ENCODE measurements at regions of chr13 and their contacts with region 1.

Region 1: GRCh38 chr13:36999054-36999714 is at the start of gene ALG5:
- DNase-seq: peak; percentile 93
- H3K4me3 Mint-ChIP-seq: peak within 1 kb of the TSS; percentile 100
- H3K27ac Mint-ChIP-seq: peak within 1 kb of the TSS; percentile 100
- H3K4me1 Mint-ChIP-seq: peaks cover 37% of the 10 kb centered on the region
- H3K27me3 Mint-ChIP-seq: no peaks in the 10 kb centered on the region
- total RNA-seq, gene ALG5: 45.6 and 49.8 TPM in 2 replicates

Region 2: GRCh38 chr13:36431654-36432511 is 567.3 kb before region 1 on chr13 and contains the start of gene CCNA1:
- intact Hi-C with region 1: loop called (anchors 2 kb)
- DNase-seq: peak; percentile 32
- H3K4me3 Mint-ChIP-seq: peak within 1 kb of the TSS; percentile 74
- H3K27ac Mint-ChIP-seq: no peak within 1 kb of the TSS
- H3K4me1 Mint-ChIP-seq: peaks cover 27% of the 10 kb centered on the region
- H3K27me3 Mint-ChIP-seq: peaks cover 40% of the 10 kb centered on the region
- total RNA-seq, gene CCNA1: 4.3 and 5.0 TPM in 2 replicates

Region 3: DNA sequence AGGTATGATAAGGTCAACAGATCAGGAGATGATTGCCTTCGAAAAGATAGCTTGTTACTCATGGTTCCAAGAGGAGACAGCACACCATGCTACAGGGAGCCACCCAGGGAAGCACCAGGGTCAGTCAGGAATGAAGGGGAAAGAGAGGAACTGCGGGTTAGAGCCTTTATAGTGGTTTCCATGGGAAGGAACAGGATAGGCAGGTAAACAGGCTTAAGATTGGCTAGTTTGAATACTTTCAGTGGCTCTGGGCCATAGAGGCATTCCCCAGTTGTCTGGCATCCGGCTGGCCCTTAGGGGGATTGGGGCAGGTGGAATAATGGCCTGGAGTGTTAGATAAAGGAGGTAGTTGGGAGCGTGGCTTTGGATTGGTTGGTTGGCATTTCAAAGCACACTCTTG is 399.5 kb before region 1 on chr13:
- intact Hi-C with region 1: no loop called
- DNase-seq: no peak
- H3K4me3 Mint-ChIP-seq: no peak overlapping the region
- H3K27ac Mint-ChIP-seq: no peak overlapping the region
- H3K4me1 Mint-ChIP-seq: no peaks in the 10 kb centered on the region
- H3K27me3 Mint-ChIP-seq: no peaks in the 10 kb centered on the region

Region 4: DNA sequence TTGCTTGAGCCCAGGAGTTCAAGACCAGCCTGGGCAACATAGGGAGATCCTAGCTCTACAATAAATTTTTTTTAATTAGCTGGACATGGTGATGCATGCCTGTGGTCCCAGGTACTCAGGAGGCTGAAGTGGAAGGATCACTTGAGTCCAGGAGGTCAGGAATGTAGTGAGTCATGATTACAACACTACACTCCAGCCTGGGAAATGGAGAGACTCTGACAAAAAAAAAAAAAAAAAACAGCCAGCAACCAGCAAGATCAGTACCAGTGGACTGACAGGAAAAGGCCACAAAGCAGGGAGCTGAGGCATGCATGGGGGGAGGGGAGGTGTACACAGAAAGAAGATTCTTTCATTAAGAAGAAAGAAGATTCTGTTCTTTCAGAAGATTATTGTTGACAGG is 232.9 kb before region 1 on chr13:
- intact Hi-C with region 1: no loop called
- DNase-seq: no peak
- H3K4me3 Mint-ChIP-seq: no peak overlapping the region
- H3K27ac Mint-ChIP-seq: no peak overlapping the region
- H3K4me1 Mint-ChIP-seq: no peaks in the 10 kb centered on the region
- H3K27me3 Mint-ChIP-seq: no peaks in the 10 kb centered on the region

Region 5: DNA sequence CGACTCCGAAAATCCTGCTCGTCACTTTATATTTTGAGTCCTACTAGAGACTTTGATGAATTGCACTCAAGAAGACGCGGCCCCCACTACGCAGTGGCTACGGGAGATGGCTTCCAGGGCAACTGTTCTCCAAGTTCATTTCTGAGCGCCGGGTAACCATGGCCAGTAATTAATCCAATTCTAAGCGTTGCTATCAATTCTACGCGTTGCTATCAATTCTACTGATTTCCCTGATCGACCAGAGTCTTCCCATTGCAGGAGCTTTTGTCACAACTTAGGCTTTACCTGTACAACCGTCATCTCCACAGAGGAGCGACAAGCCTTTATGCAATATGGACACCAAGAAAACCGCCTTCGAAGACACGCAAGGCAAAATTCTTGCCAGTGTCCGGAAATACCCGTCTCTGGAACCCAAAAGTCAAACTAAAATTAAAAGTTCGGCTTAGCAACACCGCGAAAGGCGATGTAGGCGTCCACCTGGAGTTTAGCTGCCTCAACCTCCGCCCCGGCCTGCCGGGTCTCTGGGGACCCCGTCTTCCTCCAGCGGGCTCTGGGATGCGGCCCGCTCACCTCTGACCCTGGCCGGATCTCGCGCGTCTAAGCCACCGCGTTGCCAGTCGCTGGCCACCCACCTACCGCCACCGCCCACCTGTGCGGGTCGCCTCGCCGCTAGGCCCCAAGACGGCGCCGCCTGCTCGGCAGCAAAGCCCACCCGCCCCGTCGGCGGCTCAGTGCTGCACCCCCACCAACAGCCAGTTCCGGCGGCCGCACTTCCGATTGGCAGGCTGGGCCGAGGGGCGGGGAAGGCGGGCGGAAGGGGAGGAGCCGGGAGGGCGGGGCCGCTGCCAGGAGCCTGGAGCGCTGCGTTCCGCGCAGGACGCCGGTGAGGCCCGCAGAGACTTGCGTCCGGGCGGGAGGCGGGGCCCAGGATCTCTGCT is 60.0 kb after region 1 on chr13 and contains the start of gene SUPT20H:
- intact Hi-C with region 1: loop called (anchors 1 kb)
- DNase-seq: peak; percentile 86
- H3K4me3 Mint-ChIP-seq: peak within 1 kb of the TSS; percentile 96
- H3K27ac Mint-ChIP-seq: peak within 1 kb of the TSS; percentile 94
- H3K4me1 Mint-ChIP-seq: peaks cover 18% of the 10 kb centered on the region
- H3K27me3 Mint-ChIP-seq: peaks cover 5% of the 10 kb centered on the region
- total RNA-seq, gene SUPT20H: 75.8 and 77.8 TPM in 2 replicates

Measured in activated T-helper 2 cell treated with anti-CD3 and anti-CD28 coated beads, Interferon-gamma antibody, Interleukin-2, Interleukin-4, amounts not matched to agents 10 μg/mL and 5 μg/mL and 100 μg/mL, durations not matched to agents 14 hours and 24 hours and 36 hours (primary cell).